Activated CD4-positive, alpha-beta T cell treated with anti-CD3 and anti-CD28 coated beads, Interleukin-2, amount 10 ng/mL, durations not matched to agents 24 days and 14 days (primary cell): ENCODE measurements at regions of chr1 and their contacts with region 1.

Region 1: GRCh38 chr1:184892116-184892515 is 82.2 kb downstream of the NIBAN1 start:
- DNase-seq: peak; percentile 58
- H3K4me3 Mint-ChIP-seq: no peak overlapping the region
- H3K27ac Mint-ChIP-seq: peak overlapping the region; percentile 61
- H3K4me1 Mint-ChIP-seq: peaks cover 29% of the 10 kb centered on the region
- H3K27me3 Mint-ChIP-seq: no peaks in the 10 kb centered on the region

Region 2: GRCh38 chr1:184494929-184495328 is 397.2 kb before region 1 on chr1:
- intact Hi-C with region 1: loop called (anchors 5 kb)
- DNase-seq: no peak
- H3K4me3 Mint-ChIP-seq: no peak overlapping the region
- H3K27ac Mint-ChIP-seq: no peak overlapping the region
- H3K4me1 Mint-ChIP-seq: peaks cover 16% of the 10 kb centered on the region
- H3K27me3 Mint-ChIP-seq: peaks cover 5% of the 10 kb centered on the region

Region 3: GRCh38 chr1:184941735-184942134 is 49.6 kb after region 1 on chr1:
- intact Hi-C with region 1: no loop called
- DNase-seq: no peak
- H3K4me3 Mint-ChIP-seq: no peak overlapping the region
- H3K27ac Mint-ChIP-seq: no peak overlapping the region
- H3K4me1 Mint-ChIP-seq: peaks cover 14% of the 10 kb centered on the region
- H3K27me3 Mint-ChIP-seq: no peaks in the 10 kb centered on the region

Region 4: DNA sequence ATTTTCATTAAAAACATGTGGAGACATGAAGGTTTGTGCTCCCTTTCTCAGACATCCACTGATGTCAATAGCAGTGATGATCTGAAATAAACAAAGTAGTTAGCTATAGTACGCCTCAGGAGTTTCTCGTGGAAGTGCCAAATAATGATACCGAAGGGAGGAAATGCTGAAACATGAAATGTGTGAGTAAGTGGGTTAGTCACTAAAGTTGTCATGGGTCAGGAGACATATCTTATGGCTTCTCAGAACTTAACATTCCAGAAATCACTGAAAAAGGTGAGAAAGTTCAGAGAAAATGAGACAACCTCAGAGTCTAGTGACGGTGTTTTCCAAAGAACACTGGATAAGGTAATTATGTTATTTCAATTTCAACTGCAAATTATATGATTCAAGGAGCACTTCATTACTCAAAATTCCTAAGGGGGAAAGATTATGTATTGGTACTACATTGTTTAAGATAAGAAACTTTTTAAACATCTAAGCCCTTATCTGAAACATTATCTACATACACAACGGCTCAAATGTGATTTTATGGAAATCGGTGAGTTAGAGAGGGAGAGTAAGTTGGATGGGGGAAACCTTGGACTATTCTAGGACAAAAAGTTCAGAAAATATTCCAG is 61.6 kb after region 1 on chr1:
- intact Hi-C with region 1: loop called (anchors 1 kb)
- DNase-seq: no peak
- H3K4me3 Mint-ChIP-seq: peak overlapping the region; percentile 52
- H3K27ac Mint-ChIP-seq: peak overlapping the region; percentile 69
- H3K4me1 Mint-ChIP-seq: peaks cover 16% of the 10 kb centered on the region
- H3K27me3 Mint-ChIP-seq: no peaks in the 10 kb centered on the region

Region 5: DNA sequence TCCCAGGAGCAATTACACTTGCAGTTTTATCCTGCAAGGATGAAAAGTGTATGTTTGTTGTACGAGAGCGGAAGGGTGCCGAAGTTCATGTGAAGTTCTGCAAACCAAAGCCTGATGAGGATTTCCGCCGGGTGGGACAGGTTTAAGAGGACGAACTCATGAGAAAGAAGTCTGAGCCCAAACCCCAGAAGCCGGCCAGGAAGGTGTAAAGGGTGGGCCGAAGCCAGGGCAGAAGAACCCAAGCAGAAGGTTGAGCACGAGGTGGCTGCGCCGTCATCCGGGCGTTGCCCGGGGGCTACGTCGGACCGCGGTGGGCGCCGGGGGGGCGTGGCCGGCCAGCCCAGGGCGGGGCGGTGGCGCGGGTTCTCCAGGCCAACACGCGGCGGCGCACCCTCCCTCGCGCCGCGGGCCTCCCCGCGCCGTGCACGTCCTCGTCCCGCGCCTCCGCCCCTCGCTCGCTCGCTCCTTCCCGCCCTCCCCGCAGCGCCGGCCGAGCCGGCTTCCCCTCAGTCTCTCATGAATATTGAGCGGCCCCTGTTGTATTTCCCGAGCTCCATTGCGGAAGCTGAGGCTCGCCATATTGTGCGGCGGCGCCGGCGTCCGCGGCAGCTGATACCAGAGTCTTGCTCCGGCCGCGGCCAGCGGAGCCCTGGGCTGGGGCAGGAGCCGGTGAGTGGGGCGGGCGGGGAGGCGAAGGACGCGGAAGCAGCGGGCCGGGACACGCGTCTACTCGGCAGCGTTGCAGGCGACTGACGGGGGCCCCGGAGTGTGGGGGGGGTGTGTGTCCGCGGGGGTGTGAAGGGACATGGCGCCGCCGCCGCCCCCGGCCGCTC is 153.1 kb after region 1 on chr1 and contains the start of gene RNF2:
- intact Hi-C with region 1: loop called (anchors 5 kb)
- DNase-seq: peak; percentile 91
- H3K4me3 Mint-ChIP-seq: peak within 1 kb of the TSS; percentile 93
- H3K27ac Mint-ChIP-seq: peak within 1 kb of the TSS; percentile 91
- H3K4me1 Mint-ChIP-seq: peaks cover 26% of the 10 kb centered on the region
- H3K27me3 Mint-ChIP-seq: peaks cover 18% of the 10 kb centered on the region
- total RNA-seq, gene RNF2: 17.8 and 21.1 TPM in 2 replicates